GM13977 (cell line): ENCODE measurements at regions of chr6 and their contacts with region 1.

Region 1: DNA sequence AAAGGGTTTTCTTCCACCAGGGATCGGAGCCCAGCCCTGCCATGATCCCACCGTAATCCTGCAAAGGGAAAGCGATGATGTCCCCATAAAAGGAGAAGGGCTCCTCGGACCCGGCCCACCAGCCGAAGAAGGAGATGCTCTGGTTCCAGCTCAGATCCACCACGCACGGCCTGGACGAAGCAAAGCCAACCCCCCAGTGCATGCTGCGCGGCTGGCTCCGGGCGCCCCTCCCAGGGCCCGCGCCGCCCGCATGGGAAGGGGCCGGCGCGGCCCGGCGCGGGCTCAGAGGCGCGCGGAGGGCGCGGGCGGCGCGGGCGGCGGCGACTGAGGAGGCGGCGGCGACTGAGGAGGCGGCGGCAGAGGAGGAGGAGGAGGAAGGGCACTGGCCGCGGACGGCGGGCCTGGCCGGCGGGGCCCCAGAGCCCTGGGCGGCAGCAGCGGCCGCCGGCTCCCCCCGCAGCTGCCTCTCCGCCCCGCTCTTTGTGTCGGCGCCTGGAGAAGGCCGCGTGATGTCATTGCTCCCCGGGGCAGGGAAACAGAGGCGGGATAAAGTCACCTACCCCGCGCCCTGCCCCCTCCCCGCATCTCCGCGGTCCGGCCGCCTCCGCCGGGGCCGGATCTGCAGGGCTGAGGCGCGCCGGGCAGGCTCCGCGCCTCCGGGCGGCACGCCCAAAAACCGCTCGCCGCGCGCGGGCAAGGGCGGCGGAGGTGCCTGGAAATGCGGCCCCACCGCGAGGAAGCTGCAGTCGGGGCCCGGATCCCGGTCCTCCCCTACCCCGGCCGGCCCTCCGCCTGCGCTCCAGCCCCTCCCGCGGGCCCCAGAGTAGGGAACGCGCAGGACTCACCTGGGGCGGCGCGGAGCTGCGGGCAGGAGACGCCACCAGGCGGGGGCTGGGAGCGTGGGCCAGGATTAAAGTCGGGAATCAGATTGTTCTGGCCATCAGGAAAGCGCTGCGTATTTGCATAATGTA is at the start of gene FAXC:
- DNase-seq: peak; percentile 51
- CTCF ChIP-seq: no peak

Region 2: DNA sequence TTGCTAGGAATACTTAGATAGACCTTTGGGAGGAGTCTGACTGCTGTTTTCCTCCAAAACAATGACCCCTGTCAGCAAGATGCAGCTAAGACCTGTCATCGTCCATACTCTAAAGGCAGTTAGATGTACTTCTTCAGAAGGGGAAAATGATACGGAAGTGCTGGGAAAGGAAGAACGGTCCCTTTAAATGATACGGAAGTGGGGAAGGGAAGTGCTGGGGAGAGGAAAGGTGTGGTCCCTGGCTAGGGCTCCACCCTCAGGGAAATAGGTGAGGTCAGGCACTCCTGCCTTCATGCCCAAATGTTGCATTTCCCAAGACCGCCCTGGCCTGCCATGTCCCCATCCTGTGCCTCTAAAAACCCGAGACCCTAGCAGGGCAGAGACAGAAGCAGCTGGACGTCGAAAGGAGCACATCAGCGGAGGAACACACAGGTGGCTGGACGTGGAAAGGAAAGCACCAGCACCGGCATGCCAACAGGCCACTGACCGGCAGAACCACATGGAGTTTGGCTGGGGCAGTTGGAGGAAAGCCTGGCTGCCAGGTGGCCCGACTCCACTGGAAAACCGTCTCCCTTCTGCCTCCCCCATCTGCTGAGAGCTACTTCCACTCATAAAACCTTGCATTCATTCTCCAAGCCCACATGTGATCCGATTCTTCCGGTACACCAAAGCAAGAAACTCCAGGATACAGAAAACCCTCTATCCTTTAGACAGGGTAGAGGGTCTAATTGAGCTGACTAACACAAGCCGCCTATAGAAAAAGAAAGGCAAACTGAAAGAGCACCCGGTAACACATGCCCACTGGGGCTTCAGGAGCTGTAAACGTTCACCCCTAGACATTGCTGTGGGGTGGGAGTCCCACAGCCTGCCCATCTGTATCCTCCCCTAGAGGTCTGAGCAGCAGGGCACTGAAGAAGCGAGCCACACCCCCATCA is 94.6 kb before region 1 on chr6:
- in situ Hi-C with region 1: no loop called
- DNase-seq: no peak
- CTCF ChIP-seq: no peak

Region 3: GRCh38 chr6:99425647-99426453 is 76.4 kb after region 1 on chr6:
- in situ Hi-C with region 1: loop called (anchors 10 kb)
- DNase-seq: peak; percentile 28
- CTCF ChIP-seq: peak; percentile 44